ENCODE measurements at regions of chr15 and their contacts with region 1.

Region 1: DNA sequence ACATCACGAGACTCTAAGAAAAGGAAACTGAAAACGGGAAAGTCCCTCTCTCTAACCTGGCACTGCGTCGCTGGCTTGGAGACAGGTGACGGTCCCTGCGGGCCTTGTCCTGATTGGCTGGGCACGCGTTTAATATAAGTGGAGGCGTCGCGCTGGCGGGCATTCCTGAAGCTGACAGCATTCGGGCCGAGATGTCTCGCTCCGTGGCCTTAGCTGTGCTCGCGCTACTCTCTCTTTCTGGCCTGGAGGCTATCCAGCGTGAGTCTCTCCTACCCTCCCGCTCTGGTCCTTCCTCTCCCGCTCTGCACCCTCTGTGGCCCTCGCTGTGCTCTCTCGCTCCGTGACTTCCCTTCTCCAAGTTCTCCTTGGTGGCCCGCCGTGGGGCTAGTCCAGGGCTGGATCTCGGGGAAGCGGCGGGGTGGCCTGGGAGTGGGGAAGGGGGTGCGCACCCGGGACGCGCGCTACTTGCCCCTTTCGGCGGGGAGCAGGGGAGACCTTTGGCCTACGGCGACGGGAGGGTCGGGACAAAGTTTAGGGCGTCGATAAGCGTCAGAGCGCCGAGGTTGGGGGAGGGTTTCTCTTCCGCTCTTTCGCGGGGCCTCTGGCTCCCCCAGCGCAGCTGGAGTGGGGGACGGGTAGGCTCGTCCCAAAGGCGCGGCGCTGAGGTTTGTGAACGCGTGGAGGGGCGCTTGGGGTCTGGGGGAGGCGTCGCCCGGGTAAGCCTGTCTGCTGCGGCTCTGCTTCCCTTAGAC is at the start of gene B2M:
- DNase-seq: peak; percentile 92 to 97
- ATAC-seq: peak; percentile 93 to 95
- H3K4me3 ChIP-seq: peak within 1 kb of the TSS; percentile 91 to 97 (median 94)
- H3K27ac ChIP-seq: peak within 1 kb of the TSS; percentile 96 to 99 (median 98)
- H3K4me1 ChIP-seq: peaks cover 21 to 28% of the 10 kb centered on the region in 2 donors
- H3K27me3 ChIP-seq: no peaks in the 10 kb centered on the region
- CTCF ChIP-seq: no peak
- POLR2A ChIP-seq: peak; percentile 98 to 99
- total RNA-seq, gene B2M: 787 to 1,106 (median 928) TPM

Region 2: DNA sequence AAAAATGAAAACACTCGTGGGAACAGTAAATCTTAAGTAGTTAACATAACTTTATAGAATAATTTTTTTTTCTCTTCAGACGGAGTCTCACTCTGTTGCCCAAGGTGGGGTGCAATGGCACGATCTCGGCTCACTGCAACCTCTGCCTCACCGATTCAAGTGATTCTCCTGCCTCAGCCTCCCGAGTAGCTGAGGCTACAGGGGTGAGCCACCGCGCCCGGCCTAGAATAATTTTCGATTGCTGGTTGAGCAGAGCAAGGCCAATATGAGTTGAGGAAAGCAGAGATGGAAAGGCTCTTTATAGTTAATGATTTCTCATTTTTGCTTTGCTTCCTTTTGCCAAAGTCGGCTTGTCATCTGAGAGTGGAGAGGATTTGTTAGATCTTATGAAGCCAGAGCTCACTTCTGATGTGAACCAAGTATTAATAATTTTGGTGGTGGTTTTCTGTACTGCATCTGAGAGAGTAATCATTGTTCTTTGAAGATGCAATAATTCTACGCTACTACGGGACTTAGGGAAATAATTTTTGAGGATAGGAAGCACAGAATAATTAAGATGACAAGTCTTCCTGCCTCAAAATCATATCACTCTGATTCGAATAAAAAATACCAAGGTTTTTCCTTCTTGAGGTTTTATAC is 424.6 kb before region 1 on chr15:
- in situ Hi-C with region 1: no loop called
- intact Hi-C with region 1: loop called (anchors 5 kb)
- DNase-seq: no peak
- ATAC-seq: no peak
- H3K4me3 ChIP-seq: peak overlapping the region; percentile 68 to 91 (median 80)
- H3K27ac ChIP-seq: peak overlapping the region in 2 of 4 donors; percentile 83 to 90
- H3K4me1 ChIP-seq: peaks cover 21 to 23% of the 10 kb centered on the region in 2 donors
- H3K27me3 ChIP-seq: peaks cover 0 to 5% (median 0%) of the 10 kb centered on the region in 3 donors
- CTCF ChIP-seq: peak in 2 of 5 experiments; percentile 10 to 32
- POLR2A ChIP-seq: no peak

Region 3: GRCh38 chr15:44536962-44537734 is 174.4 kb before region 1 on chr15 and contains the start of gene EIF3J:
- in situ Hi-C with region 1: no loop called
- intact Hi-C with region 1: loop called (anchors 5 kb)
- DNase-seq: peak; percentile 94 to 96
- ATAC-seq: peak; percentile 88 to 90
- H3K4me3 ChIP-seq: peak within 1 kb of the TSS; percentile 67 to 99 (median 89)
- H3K27ac ChIP-seq: peak within 1 kb of the TSS; percentile 90 to 99 (median 94)
- H3K4me1 ChIP-seq: peaks cover 38 to 48% of the 10 kb centered on the region in 2 donors
- H3K27me3 ChIP-seq: no peaks in the 10 kb centered on the region
- CTCF ChIP-seq: no peak
- POLR2A ChIP-seq: peak; percentile 84 to 97
- total RNA-seq, gene EIF3J: 79.2 to 122 (median 103) TPM

Region 4: DNA sequence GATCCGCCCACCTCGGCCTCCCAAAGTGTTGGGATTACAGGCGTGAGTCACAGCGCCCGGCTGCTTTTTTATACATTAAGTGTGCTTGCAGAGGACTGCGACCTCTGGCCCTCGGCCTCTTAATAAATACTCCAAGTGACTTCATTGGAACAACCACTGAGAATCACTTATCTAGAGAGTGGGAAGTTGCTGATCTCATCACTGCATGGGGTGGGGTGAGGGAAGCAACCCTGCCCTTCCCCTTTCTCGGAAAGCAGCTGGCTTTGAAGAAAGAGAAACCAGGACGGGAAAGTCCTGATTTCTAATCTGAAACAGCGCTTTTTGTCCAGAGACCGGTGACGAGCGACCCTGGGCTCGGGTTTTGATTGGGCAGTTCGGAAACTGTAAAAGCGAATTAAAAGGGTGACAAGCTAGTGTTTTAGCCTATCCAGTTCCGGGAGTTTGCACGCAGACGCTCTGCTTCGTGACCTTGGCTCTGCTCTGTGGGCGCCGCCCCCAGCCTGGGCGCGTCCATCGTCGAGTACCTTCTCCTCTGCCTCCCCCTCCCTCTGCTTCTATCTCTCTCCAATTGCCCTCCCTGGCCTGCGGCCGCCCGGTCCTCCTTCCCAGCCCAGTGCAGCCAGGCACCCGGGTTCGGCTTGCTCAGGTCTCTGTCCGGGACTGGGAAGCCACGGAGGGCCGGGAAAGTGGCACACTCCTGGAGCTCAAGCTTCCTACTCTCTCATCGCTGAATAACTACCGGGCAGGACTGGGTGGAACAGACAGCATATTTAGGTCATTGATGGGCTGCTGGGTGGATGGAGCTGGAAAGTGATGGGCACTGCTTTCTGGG is 17.3 kb after region 1 on chr15:
- in situ Hi-C with region 1: no loop called
- intact Hi-C with region 1: loop called (anchors 1 kb)
- DNase-seq: peak; percentile 90 to 96
- ATAC-seq: peak; percentile 98
- H3K4me3 ChIP-seq: peak overlapping the region; percentile 60 to 98 (median 84)
- H3K27ac ChIP-seq: peak overlapping the region; percentile 87 to 100 (median 96)
- H3K4me1 ChIP-seq: peaks cover 16 to 24% of the 10 kb centered on the region in 2 donors
- H3K27me3 ChIP-seq: no peaks in the 10 kb centered on the region
- CTCF ChIP-seq: no peak
- POLR2A ChIP-seq: peak; percentile 80 to 87

Region 5: GRCh38 chr15:44788748-44789147 is 77.2 kb after region 1 on chr15:
- in situ Hi-C with region 1: no loop called
- intact Hi-C with region 1: no loop called
- DNase-seq: no peak
- ATAC-seq: no peak
- H3K4me3 ChIP-seq: no peak overlapping the region
- H3K27ac ChIP-seq: no peak overlapping the region
- H3K4me1 ChIP-seq: no peaks in the 10 kb centered on the region
- H3K27me3 ChIP-seq: no peaks in the 10 kb centered on the region
- CTCF ChIP-seq: no peak
- POLR2A ChIP-seq: no peak

Region 6: DNA sequence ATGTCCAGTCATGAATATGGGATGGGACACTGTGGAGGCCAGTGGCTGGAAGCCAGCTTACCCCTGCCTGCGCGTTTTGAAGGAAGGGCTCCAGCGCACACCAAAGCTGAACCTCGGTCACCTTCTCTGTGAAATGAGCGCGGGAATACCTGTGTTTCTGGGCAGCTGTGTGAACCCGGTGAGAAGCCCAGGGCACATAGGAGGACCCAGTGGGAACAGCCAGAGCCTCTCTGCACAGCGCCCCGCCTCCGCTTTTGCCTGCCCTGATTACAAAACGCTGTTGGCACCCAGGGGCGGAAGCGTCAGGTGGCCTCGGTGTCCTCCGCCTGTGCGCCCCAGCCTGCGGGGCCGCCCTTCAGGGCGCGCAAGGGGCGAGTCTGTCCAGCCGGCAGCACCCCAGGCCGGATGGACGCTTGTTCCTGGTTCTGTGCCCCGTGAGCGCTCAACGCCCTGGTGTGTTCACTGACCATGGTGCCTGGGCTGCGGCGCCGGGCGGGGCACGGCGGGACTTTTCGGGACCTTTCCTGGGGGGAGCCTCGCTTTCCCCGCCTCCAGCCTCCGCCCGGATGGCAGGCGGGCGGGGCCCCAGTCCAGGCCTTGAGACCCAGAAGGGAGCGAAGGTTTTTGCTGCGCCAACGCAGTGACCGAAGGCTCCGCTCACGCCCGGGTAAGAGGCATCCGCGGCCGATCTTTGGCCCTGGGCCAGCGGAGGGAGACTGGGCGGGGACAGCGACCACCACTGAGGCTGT is 923.1 kb after region 1 on chr15 and contains the start of gene SQOR:
- in situ Hi-C with region 1: no loop called
- intact Hi-C with region 1: loop called (anchors 5 kb)
- DNase-seq: peak; percentile 85 to 95
- ATAC-seq: peak; percentile 78 to 81
- H3K4me3 ChIP-seq: peak within 1 kb of the TSS; percentile 84 to 95 (median 88)
- H3K27ac ChIP-seq: peak within 1 kb of the TSS; percentile 98 to 99 (median 98)
- H3K4me1 ChIP-seq: peaks cover 34 to 35% of the 10 kb centered on the region in 2 donors
- H3K27me3 ChIP-seq: no peaks in the 10 kb centered on the region
- CTCF ChIP-seq: no peak
- POLR2A ChIP-seq: peak; percentile 91 to 93
- total RNA-seq, gene SQOR: 140 to 194 (median 164) TPM

Measured in gastrocnemius medialis (tissue), 4 donors.